ENCODE measurements at regions of chr3 and their contacts with region 1.

Region 1: GRCh38 chr3:160577556-160578195 is 12.3 kb upstream of the KPNA4 start:
- DNase-seq: peak in 1 of 2 experiments; percentile 44
- H3K4me3 ChIP-seq: no peak overlapping the region
- H3K27ac ChIP-seq: no peak overlapping the region
- H3K4me1 ChIP-seq: peaks cover 7% of the 10 kb centered on the region; the same call in 1 of the 2 replicates
- H3K27me3 ChIP-seq: no peaks in the 10 kb centered on the region
- CTCF ChIP-seq: peak; percentile 44

Region 2: GRCh38 chr3:160707187-160707794 is 129.6 kb after region 1 on chr3:
- CTCF ChIA-PET with region 1: no interaction called
- POLR2A ChIA-PET with region 1: interaction called, 10 read pairs
- intact Hi-C with region 1: no loop called
- DNase-seq: peak; percentile 21 to 41
- H3K4me3 ChIP-seq: no peak overlapping the region
- H3K27ac ChIP-seq: no peak overlapping the region
- H3K4me1 ChIP-seq: no peaks in the 10 kb centered on the region
- H3K27me3 ChIP-seq: no peaks in the 10 kb centered on the region
- CTCF ChIP-seq: peak; percentile 76

Region 3: GRCh38 chr3:160921020-160921635 is 343.5 kb after region 1 on chr3:
- CTCF ChIA-PET with region 1: no interaction called
- POLR2A ChIA-PET with region 1: no interaction called
- intact Hi-C with region 1: loop called (anchors 5 kb)
- DNase-seq: peak in 1 of 2 experiments; percentile 28
- H3K4me3 ChIP-seq: no peak overlapping the region
- H3K27ac ChIP-seq: no peak overlapping the region
- H3K4me1 ChIP-seq: no peaks in the 10 kb centered on the region
- H3K27me3 ChIP-seq: no peaks in the 10 kb centered on the region
- CTCF ChIP-seq: peak; percentile 91